ENCODE measurements at regions of chr4 and their contacts with region 1.

Region 1: DNA sequence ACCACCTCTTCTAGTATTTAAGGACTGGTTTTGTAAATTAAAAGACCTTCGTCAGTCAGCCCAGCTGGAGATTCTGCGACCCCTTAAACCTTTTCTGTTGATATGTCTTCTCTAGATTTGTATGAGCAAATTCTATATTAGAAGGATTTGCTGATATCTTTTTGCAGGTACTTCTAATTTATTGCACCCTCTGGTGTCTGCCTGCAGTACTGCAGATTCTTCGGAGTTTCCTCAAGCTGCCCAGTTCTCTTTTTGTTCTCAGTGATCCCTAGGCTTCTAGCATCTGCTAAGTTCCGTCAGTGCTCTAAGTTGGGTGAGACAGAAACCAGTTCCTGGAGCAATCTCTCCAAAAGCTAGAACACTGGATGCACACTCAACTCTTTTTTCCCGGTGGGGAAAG is 545.2 kb downstream of the C4orf33 start:
- DNase-seq: peak; percentile 30 to 58 (median 47)
- H3K4me3 ChIP-seq: no peak overlapping the region
- H3K4me3 Mint-ChIP-seq: no peak overlapping the region
- H3K27ac ChIP-seq: no peak overlapping the region
- H3K27ac Mint-ChIP-seq: peak overlapping the region in 1 of 7 donors; percentile 10
- H3K4me1 ChIP-seq: no peaks in the 10 kb centered on the region
- H3K4me1 Mint-ChIP-seq: no peaks in the 10 kb centered on the region
- H3K27me3 ChIP-seq: no peaks in the 10 kb centered on the region
- H3K27me3 Mint-ChIP-seq: peaks cover 0 to 6% (median 0%) of the 10 kb centered on the region in 3 donors
- CTCF ChIP-seq: peak; percentile 89

Region 2: GRCh38 chr4:129344058-129344457 is 297.1 kb before region 1 on chr4:
- intact Hi-C with region 1: loop called (anchors 5 kb)
- DNase-seq: peak; percentile 36 to 67 (median 49)
- H3K4me3 ChIP-seq: no peak overlapping the region
- H3K4me3 Mint-ChIP-seq: no peak overlapping the region
- H3K27ac ChIP-seq: peak overlapping the region in 1 of 2 donors; percentile 80
- H3K27ac Mint-ChIP-seq: no peak overlapping the region
- H3K4me1 ChIP-seq: peaks cover 35 to 56% of the 10 kb centered on the region in 2 donors
- H3K4me1 Mint-ChIP-seq: peaks cover 53% of the 10 kb centered on the region
- H3K27me3 ChIP-seq: no peaks in the 10 kb centered on the region
- H3K27me3 Mint-ChIP-seq: no peaks in the 10 kb centered on the region
- CTCF ChIP-seq: peak; percentile 85

Region 3: GRCh38 chr4:130023088-130023487 is 381.9 kb after region 1 on chr4:
- intact Hi-C with region 1: no loop called
- DNase-seq: no peak
- H3K4me3 ChIP-seq: no peak overlapping the region
- H3K4me3 Mint-ChIP-seq: no peak overlapping the region
- H3K27ac ChIP-seq: no peak overlapping the region
- H3K27ac Mint-ChIP-seq: no peak overlapping the region
- H3K4me1 ChIP-seq: no peaks in the 10 kb centered on the region
- H3K4me1 Mint-ChIP-seq: no peaks in the 10 kb centered on the region
- H3K27me3 ChIP-seq: no peaks in the 10 kb centered on the region
- H3K27me3 Mint-ChIP-seq: no peaks in the 10 kb centered on the region
- CTCF ChIP-seq: no peak